ENCODE measurements at regions of chr15 and their contacts with region 1.

Region 1: GRCh38 chr15:81449836-81450495 is 76.0 kb upstream of the TMC3 start:
- DNase-seq: no peak
- ATAC-seq: no peak
- H3K4me3 ChIP-seq: no peak overlapping the region
- H3K27ac ChIP-seq: no peak overlapping the region
- H3K4me1 ChIP-seq: no peaks in the 10 kb centered on the region
- H3K27me3 ChIP-seq: no peaks in the 10 kb centered on the region
- CTCF ChIP-seq: no peak

Region 2: GRCh38 chr15:81666839-81667238 is 216.9 kb after region 1 on chr15:
- intact Hi-C with region 1: loop called in 1 of 10 experiments (anchors 10 kb)
- DNase-seq: no peak
- ATAC-seq: no peak
- H3K4me3 ChIP-seq: no peak overlapping the region
- H3K27ac ChIP-seq: no peak overlapping the region
- H3K4me1 ChIP-seq: no peaks in the 10 kb centered on the region
- H3K27me3 ChIP-seq: no peaks in the 10 kb centered on the region
- CTCF ChIP-seq: no peak